Dorsolateral prefrontal cortex (tissue), 120 donors: ENCODE measurements at regions of chr7 and their contacts with region 1.

Region 1: GRCh38 chr7:141072548-141073172 is 1.2 kb upstream of the TMEM178B start:
- DNase-seq: peak; percentile 58 to 93 (median 84)
- H3K4me3 ChIP-seq: peak overlapping the region; percentile 57 to 89 (median 77)
- H3K27ac ChIP-seq: peak overlapping the region in 58 of 59 donors; percentile 39 to 94 (median 86)
- H3K27me3 ChIP-seq: peaks cover 0 to 4% (median 0%) of the 10 kb centered on the region in 45 donors
- CTCF ChIP-seq: peak in 15 of 56 donors; percentile 9 to 33 (median 21)

Region 2: DNA sequence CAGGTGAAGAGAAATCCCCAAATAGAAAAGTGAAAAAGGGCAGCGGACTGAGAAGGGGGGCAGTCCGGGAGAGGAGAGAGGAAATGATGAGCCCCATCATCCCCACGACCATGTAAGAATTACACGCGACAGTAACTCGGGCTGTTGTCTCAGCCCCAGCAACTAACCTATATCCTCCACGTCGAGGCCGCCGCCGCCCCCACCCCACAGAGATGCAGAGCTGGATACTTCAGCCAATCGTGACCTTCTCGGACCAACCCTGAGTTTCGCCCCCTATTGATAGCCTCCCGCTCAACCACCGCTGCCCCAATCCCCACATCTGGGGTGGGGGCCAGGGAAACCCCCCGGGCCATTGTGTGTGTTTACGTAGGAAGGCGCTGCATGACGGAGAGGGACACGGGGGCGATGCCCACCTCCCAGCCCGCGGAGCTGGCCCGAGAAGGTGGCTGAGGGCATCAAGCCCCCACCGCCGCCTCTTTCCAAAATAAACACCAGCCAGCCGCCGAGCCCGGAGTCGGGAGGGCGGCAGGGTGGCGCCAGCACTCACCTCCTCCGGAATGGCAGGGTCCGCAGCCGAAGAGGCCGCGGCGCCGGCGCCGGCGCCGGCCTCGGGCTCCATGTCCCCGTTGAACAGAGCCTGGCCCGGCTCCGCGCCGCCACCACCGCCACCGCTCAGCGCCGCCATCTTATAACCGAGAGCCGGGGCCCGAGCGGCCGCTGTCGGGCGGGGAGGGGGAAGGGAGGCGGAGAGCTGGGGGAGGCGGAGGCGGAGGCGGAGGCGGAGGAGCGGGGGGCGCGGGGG is 148.4 kb before region 1 on chr7:
- intact Hi-C with region 1: loop called in 1 of 2 experiments (anchors 10 kb)
- DNase-seq: peak; percentile 54 to 84 (median 74)
- H3K4me3 ChIP-seq: peak overlapping the region; percentile 62 to 99 (median 92)
- H3K27ac ChIP-seq: peak overlapping the region; percentile 92 to 100 (median 99)
- H3K27me3 ChIP-seq: no peaks in the 10 kb centered on the region
- CTCF ChIP-seq: peak in 55 of 56 donors; percentile 14 to 79 (median 56)

Region 3: DNA sequence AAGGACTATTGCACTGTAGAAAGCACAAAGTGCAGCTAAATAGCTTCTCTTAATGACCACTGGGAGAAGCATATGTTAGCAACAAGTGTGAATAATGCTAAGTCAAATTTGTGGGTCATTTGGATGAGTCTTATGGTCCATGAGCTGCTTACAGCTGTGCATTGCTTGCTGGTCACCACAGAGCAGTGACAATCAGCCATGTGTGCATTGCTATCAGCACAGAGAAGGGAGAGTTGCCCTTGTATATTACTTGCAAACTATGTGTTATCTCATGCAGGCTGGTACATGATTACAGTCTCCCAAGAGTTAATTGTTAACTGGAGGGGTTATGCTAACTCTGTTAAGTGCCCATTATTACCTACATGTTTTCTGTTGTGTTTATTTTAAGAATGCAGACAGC is 83.6 kb before region 1 on chr7:
- intact Hi-C with region 1: no loop called
- DNase-seq: no peak
- H3K4me3 ChIP-seq: no peak overlapping the region
- H3K27ac ChIP-seq: no peak overlapping the region
- H3K27me3 ChIP-seq: no peaks in the 10 kb centered on the region
- CTCF ChIP-seq: no peak

Region 4: DNA sequence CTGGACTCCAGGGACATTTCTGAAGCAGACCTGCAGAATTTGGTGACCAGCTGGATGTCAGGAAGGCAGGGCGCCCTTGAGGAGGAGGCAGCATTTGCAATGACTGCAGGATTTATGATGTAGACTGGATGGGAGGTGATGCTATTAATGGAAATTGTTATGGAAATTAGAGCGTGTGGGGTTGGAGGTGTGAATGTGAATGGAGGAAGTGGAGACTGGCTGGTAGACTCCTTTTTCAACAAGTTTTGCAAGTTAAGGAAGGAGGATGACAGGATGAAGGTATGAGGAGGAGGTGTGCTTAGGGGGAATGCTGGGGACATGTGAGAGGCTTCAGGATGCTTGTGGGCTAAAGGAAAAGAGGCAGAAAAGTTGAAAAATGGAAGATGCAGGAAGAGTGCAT is 138.2 kb after region 1 on chr7:
- intact Hi-C with region 1: loop called in 1 of 2 experiments (anchors 10 kb)
- DNase-seq: no peak
- H3K4me3 ChIP-seq: no peak overlapping the region
- H3K27ac ChIP-seq: no peak overlapping the region
- H3K27me3 ChIP-seq: no peaks in the 10 kb centered on the region
- CTCF ChIP-seq: no peak

Region 5: GRCh38 chr7:141262101-141263090 is 189.7 kb after region 1 on chr7:
- intact Hi-C with region 1: loop called in 1 of 2 experiments (anchors 5 kb)
- DNase-seq: peak in 2 of 10 donors; percentile 13 to 49
- H3K4me3 ChIP-seq: peak overlapping the region in 4 of 59 donors; percentile 4 to 8 (median 4)
- H3K27ac ChIP-seq: peak overlapping the region in 31 of 59 donors; percentile 0 to 64 (median 39)
- H3K27me3 ChIP-seq: no peaks in the 10 kb centered on the region
- CTCF ChIP-seq: peak in 55 of 56 donors; percentile 14 to 66 (median 49)

Region 6: GRCh38 chr7:141551094-141551781 is 478.6 kb after region 1 on chr7 and contains the start of gene AGK:
- intact Hi-C with region 1: loop called in 1 of 2 experiments (anchors 5 kb)
- DNase-seq: peak; percentile 54 to 87 (median 69)
- H3K4me3 ChIP-seq: peak within 1 kb of the TSS; percentile 62 to 98 (median 89)
- H3K27ac ChIP-seq: peak within 1 kb of the TSS in 58 of 59 donors; percentile 17 to 91 (median 68)
- H3K27me3 ChIP-seq: no peaks in the 10 kb centered on the region
- CTCF ChIP-seq: peak in 40 of 56 donors; percentile 7 to 60 (median 26)
- total RNA-seq, gene AGK: 33.6 to 74.7 (median 51.5) TPM